Activated CD8-positive, alpha-beta T cell treated with anti-CD3 and anti-CD28 coated beads for 36 hours (primary cell): ENCODE measurements at regions of chr2 and their contacts with region 1.

Region 1: GRCh38 chr2:191051825-191052778 is 38.1 kb upstream of the STAT1 start:
- DNase-seq: no peak
- ATAC-seq: peak; percentile 72
- H3K4me3 Mint-ChIP-seq: no peak overlapping the region
- H3K27ac Mint-ChIP-seq: no peak overlapping the region
- H3K4me1 Mint-ChIP-seq: peaks cover 21% of the 10 kb centered on the region
- H3K27me3 Mint-ChIP-seq: no peaks in the 10 kb centered on the region
- CTCF ChIP-seq: peak; percentile 94

Region 2: GRCh38 chr2:191030521-191031154 is 21.5 kb before region 1 on chr2:
- CTCF ChIA-PET with region 1: interaction called, 35 read pairs
- POLR2A ChIA-PET with region 1: interaction called, 8 read pairs
- intact Hi-C with region 1: no loop called
- DNase-seq: peak; percentile 59
- ATAC-seq: peak; percentile 78
- H3K4me3 Mint-ChIP-seq: no peak overlapping the region
- H3K27ac Mint-ChIP-seq: peak overlapping the region; percentile 66
- H3K4me1 Mint-ChIP-seq: peaks cover 45% of the 10 kb centered on the region
- H3K27me3 Mint-ChIP-seq: no peaks in the 10 kb centered on the region
- CTCF ChIP-seq: peak; percentile 73

Region 3: DNA sequence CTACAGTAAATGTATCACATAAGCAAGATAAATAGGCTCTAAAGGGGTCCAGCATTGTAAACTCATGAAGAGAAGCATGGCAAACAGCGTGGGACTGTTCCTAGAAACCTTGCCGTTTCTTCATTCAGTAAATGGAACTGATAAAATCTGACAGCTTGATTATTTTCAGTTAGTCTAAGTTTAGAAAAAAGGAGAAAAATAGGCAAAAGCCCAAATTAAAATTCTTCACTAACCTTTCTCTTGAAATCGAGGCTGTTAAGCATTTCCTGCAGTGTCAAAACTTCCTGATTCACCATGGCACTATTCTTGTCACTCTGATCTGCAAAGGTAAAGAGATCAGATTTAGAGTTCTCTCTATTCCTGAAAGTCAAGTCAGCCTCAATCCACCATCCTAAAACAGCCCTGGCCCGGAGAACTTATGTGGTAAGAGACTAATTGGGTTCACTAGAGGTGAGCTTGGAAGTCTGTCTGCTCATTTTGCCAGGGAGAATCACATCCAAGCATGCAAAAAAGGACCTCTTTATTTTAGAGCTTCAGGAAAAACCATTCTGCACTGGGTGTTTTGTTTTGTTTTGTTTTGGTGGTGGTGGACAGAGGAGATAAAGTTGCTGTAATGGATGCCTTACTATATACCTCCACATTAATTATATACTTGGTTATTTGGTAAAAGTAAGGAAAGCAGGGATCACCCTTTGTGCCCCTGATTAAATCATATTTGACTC is 14.3 kb after region 1 on chr2:
- CTCF ChIA-PET with region 1: interaction called, 72 read pairs
- POLR2A ChIA-PET with region 1: interaction called, 4 read pairs
- intact Hi-C with region 1: no loop called
- DNase-seq: peak; percentile 24
- ATAC-seq: peak; percentile 40
- H3K4me3 Mint-ChIP-seq: peak overlapping the region; percentile 84
- H3K27ac Mint-ChIP-seq: peak overlapping the region; percentile 79
- H3K4me1 Mint-ChIP-seq: peaks cover 82% of the 10 kb centered on the region
- H3K27me3 Mint-ChIP-seq: no peaks in the 10 kb centered on the region
- CTCF ChIP-seq: no peak

Region 4: GRCh38 chr2:191114403-191114886 is 62.3 kb after region 1 on chr2:
- CTCF ChIA-PET with region 1: interaction called, 17 read pairs
- POLR2A ChIA-PET with region 1: interaction called, 3 read pairs
- intact Hi-C with region 1: no loop called
- DNase-seq: peak; percentile 63
- ATAC-seq: peak; percentile 28
- H3K4me3 Mint-ChIP-seq: peak overlapping the region; percentile 65
- H3K27ac Mint-ChIP-seq: peak overlapping the region; percentile 98
- H3K4me1 Mint-ChIP-seq: peaks cover 83% of the 10 kb centered on the region
- H3K27me3 Mint-ChIP-seq: no peaks in the 10 kb centered on the region
- CTCF ChIP-seq: no peak

Region 5: GRCh38 chr2:191165176-191165643 is 113.1 kb after region 1 on chr2:
- CTCF ChIA-PET with region 1: interaction called, 643 read pairs
- POLR2A ChIA-PET with region 1: interaction called, 5 read pairs
- intact Hi-C with region 1: no loop called
- DNase-seq: no peak
- ATAC-seq: peak; percentile 84
- H3K4me3 Mint-ChIP-seq: no peak overlapping the region
- H3K27ac Mint-ChIP-seq: no peak overlapping the region
- H3K4me1 Mint-ChIP-seq: peaks cover 25% of the 10 kb centered on the region
- H3K27me3 Mint-ChIP-seq: no peaks in the 10 kb centered on the region
- CTCF ChIP-seq: peak; percentile 84